PC-3 (cell line): ENCODE measurements at regions of chr5 and their contacts with region 1.

Region 1: GRCh38 chr5:65925601-65926275 is 637 bp upstream of the ERBIN start:
- DNase-seq: peak; percentile 73
- ATAC-seq: peak; percentile 69
- H3K4me3 ChIP-seq: peak overlapping the region; percentile 88
- H3K27ac ChIP-seq: peak overlapping the region; percentile 87
- H3K4me1 ChIP-seq: peaks cover 15% of the 10 kb centered on the region
- H3K27me3 ChIP-seq: no peaks in the 10 kb centered on the region
- CTCF ChIP-seq: no peak; the same call in 1 of the 2 replicates

Region 2: GRCh38 chr5:65696892-65697291 is 228.8 kb before region 1 on chr5:
- CTCF ChIA-PET with region 1: no interaction called
- POLR2A ChIA-PET with region 1: no interaction called
- intact Hi-C with region 1: no loop called
- DNase-seq: no peak
- ATAC-seq: no peak
- H3K4me3 ChIP-seq: no peak overlapping the region
- H3K27ac ChIP-seq: no peak overlapping the region
- H3K4me1 ChIP-seq: no peaks in the 10 kb centered on the region
- H3K27me3 ChIP-seq: no peaks in the 10 kb centered on the region
- CTCF ChIP-seq: no peak

Region 3: DNA sequence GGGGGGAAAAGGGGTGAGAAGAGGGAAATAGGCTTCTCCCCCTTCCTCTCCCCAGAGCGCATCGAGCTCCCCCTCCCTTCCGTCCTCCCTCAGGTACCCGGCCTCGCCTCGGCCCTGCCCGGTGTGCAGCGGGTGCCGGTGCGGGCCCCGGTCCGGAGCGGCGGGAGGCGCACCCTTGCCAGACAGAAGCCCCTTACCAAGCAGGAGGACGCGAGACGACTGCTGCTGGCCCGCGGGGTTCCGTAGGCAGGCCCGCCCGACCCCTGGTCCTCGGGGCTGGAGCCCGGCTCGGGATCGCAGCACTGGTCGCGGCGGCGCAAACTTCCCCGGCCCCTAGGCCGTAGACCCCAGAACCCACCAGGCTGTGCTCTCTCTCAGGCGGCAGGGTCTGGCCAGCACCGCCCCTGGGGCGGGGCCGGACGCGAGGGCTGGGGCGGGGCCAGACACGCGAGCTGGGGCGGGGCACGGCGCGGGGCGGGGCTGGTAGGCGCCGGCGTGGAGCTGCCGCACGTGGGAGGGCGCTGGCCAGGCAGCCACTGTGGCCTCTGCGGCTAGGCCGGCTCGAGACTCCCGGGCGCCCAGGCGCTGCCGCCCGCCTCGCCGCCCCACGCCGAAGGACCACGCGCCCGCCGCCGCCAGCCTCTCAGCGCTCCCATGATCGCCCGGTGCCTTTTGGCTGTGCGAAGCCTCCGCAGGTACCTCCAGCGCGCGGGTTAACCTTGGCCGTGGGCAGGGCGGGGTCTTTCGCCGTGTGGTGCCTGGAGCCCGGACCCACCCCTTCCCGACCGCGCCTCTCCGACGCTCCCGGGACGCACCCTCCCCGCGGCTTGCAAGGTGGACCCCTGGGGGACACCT is 203.8 kb before region 1 on chr5 and contains the starts of genes NLN and SGTB:
- CTCF ChIA-PET with region 1: no interaction called
- POLR2A ChIA-PET with region 1: no interaction called
- intact Hi-C with region 1: loop called (anchors 5 kb)
- DNase-seq: peak; percentile 55
- ATAC-seq: peak; percentile 85
- H3K4me3 ChIP-seq: peak within 1 kb of the TSS; percentile 81
- H3K27ac ChIP-seq: peak within 1 kb of the TSS; percentile 18; the same call in 1 of the 2 replicates
- H3K4me1 ChIP-seq: no peaks in the 10 kb centered on the region
- H3K27me3 ChIP-seq: no peaks in the 10 kb centered on the region
- CTCF ChIP-seq: no peak
- total RNA-seq, gene NLN: 7.9 and 13.6 TPM in 2 replicates
- total RNA-seq, gene SGTB: 0.98 and 1.1 TPM in 2 replicates

Region 4: GRCh38 chr5:65742565-65743231 is 183.0 kb before region 1 on chr5:
- CTCF ChIA-PET with region 1: no interaction called
- POLR2A ChIA-PET with region 1: interaction called, 4 read pairs
- intact Hi-C with region 1: loop called (anchors 5 kb)
- DNase-seq: peak; percentile 60
- ATAC-seq: peak; percentile 37; the same call in 1 of the 2 replicates
- H3K4me3 ChIP-seq: no peak overlapping the region
- H3K27ac ChIP-seq: no peak overlapping the region
- H3K4me1 ChIP-seq: peaks cover 6% of the 10 kb centered on the region
- H3K27me3 ChIP-seq: no peaks in the 10 kb centered on the region
- CTCF ChIP-seq: peak; percentile 57

Region 5: DNA sequence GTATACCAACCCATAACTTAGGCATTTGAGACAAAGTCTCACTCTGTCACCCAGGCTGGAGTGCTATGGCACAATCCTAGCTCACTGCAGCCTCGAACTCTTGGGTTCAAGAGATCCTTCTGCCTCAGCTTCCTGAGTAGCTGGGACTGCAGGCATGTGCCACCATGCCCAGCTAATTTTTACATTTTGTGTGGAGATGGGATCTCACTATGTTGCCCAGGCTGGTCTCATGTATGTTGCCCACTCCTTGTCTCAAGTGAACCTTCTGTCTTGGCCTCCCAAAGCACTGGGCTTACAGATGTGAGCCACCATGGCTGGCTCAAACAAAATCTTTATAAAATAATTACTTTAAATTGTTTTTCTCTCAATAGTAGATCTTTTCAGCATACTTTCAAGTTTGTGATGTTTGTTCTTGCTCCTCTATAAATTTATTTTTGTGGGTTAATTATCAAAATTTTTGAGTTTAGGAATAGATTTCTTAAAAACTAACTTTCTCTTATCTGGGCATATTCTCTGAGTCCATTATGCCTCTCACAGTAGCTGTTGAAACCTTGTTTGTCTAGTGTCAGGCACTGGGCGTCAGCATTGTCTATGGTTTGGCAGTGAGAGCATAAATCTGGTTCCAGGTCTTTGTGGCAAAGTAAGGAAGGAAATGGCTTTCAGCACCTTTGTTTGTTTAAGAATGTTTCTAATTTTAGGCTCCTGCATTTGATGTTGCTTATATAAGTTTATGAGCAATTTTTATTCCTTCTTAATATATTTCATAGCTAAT is 165.0 kb before region 1 on chr5:
- CTCF ChIA-PET with region 1: no interaction called
- POLR2A ChIA-PET with region 1: interaction called, 3 read pairs
- intact Hi-C with region 1: loop called (anchors 5 kb)
- DNase-seq: peak; percentile 61
- ATAC-seq: peak; percentile 77
- H3K4me3 ChIP-seq: no peak overlapping the region
- H3K27ac ChIP-seq: no peak overlapping the region
- H3K4me1 ChIP-seq: peaks cover 3% of the 10 kb centered on the region; the same call in 1 of the 2 replicates
- H3K27me3 ChIP-seq: no peaks in the 10 kb centered on the region
- CTCF ChIP-seq: peak; percentile 47

Region 6: GRCh38 chr5:65825408-65826328 is 100.1 kb before region 1 on chr5:
- CTCF ChIA-PET with region 1: no interaction called
- POLR2A ChIA-PET with region 1: no interaction called
- intact Hi-C with region 1: no loop called
- DNase-seq: no peak
- ATAC-seq: no peak
- H3K4me3 ChIP-seq: no peak overlapping the region
- H3K27ac ChIP-seq: no peak overlapping the region
- H3K4me1 ChIP-seq: peaks cover 6% of the 10 kb centered on the region; the same call in 1 of the 2 replicates
- H3K27me3 ChIP-seq: no peaks in the 10 kb centered on the region
- CTCF ChIP-seq: no peak

Region 7: DNA sequence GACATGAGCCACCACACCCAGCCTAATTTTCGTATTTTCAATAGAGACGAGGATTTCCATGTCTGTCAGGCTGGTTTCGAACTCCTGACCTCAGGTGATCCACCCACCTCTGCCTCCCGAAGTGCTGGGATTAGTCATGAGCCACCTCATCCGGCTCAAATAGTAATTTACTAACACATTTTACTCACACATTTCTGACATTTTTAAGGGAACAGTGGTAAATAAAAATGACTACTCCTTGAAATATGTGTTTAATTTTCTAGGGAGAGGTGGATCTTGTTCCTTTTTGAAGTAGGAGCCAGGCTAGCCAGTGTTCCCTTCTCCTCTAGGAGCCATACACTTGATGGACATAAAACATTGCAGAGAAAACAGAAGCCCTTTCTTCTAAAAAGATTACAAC is 54.6 kb before region 1 on chr5:
- CTCF ChIA-PET with region 1: no interaction called
- POLR2A ChIA-PET with region 1: interaction called, 16 read pairs
- intact Hi-C with region 1: loop called (anchors 5 kb)
- DNase-seq: peak; percentile 63
- ATAC-seq: peak; percentile 63
- H3K4me3 ChIP-seq: no peak overlapping the region
- H3K27ac ChIP-seq: peak overlapping the region; percentile 44; the same call in 1 of the 2 replicates
- H3K4me1 ChIP-seq: peaks cover 18% of the 10 kb centered on the region
- H3K27me3 ChIP-seq: no peaks in the 10 kb centered on the region
- CTCF ChIP-seq: no peak

Region 8: GRCh38 chr5:65955746-65956145 is 30.0 kb after region 1 on chr5:
- CTCF ChIA-PET with region 1: no interaction called
- POLR2A ChIA-PET with region 1: no interaction called
- intact Hi-C with region 1: no loop called
- DNase-seq: no peak
- ATAC-seq: no peak
- H3K4me3 ChIP-seq: no peak overlapping the region
- H3K27ac ChIP-seq: no peak overlapping the region
- H3K4me1 ChIP-seq: no peaks in the 10 kb centered on the region
- H3K27me3 ChIP-seq: no peaks in the 10 kb centered on the region
- CTCF ChIP-seq: no peak